Activated CD4-positive, alpha-beta T cell treated with anti-CD3 and anti-CD28 coated beads for 36 hours (primary cell): ENCODE measurements at regions of chr17 and their contacts with region 1.

Region 1: GRCh38 chr17:4215882-4216570 is 47.8 kb downstream of the ANKFY1 start:
- DNase-seq: no peak
- ATAC-seq: no peak
- H3K4me3 Mint-ChIP-seq: no peak overlapping the region
- H3K27ac Mint-ChIP-seq: peak overlapping the region; percentile 3
- H3K4me1 Mint-ChIP-seq: peaks cover 7% of the 10 kb centered on the region
- H3K27me3 Mint-ChIP-seq: no peaks in the 10 kb centered on the region

Region 2: DNA sequence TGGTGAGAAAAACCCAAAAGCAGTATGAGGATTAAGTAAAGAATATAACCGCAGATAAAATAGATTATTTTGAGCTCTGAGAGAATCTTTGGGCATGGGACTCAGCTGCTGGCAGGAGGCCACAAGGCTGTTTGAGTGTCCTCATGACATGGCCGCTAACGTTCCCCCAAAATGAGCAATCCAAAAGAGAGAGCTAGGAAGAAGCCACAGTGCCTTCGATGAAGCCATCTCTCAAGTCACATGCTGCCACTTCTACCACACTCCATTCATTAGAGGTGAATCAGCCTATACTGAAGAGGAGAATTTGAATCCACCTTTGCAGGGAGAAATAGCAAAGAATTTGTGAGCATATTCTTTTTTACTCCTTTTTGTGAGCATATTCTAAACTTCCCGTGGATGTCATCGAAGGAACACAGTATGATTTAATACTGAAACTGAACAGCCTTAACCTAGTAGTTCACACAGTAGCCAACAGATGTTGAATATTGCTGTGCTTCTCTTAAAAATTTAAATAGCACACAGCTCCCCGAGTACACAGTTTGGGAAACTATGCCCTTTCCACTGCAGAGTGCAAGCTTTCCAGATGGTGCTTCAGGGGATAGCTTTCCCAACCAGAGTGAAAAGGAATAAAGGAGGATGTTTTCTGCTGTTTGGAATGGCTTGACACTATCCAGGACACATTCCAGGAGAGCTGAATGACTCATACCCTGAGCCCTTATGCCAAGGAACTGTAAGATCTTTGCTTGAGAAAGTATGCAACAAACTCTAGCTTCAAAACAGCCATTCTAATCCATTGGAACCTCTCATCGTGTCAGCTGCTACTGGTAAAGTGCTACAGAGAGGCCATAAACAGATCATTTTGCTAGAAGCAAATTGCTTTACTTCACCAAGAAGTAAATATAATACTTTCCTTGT is 13.9 kb after region 1 on chr17:
- CTCF ChIA-PET with region 1: interaction called, 17 read pairs
- POLR2A ChIA-PET with region 1: no interaction called
- intact Hi-C with region 1: no loop called
- DNase-seq: no peak
- ATAC-seq: no peak
- H3K4me3 Mint-ChIP-seq: no peak overlapping the region
- H3K27ac Mint-ChIP-seq: no peak overlapping the region
- H3K4me1 Mint-ChIP-seq: peaks cover 21% of the 10 kb centered on the region
- H3K27me3 Mint-ChIP-seq: no peaks in the 10 kb centered on the region

Region 3: DNA sequence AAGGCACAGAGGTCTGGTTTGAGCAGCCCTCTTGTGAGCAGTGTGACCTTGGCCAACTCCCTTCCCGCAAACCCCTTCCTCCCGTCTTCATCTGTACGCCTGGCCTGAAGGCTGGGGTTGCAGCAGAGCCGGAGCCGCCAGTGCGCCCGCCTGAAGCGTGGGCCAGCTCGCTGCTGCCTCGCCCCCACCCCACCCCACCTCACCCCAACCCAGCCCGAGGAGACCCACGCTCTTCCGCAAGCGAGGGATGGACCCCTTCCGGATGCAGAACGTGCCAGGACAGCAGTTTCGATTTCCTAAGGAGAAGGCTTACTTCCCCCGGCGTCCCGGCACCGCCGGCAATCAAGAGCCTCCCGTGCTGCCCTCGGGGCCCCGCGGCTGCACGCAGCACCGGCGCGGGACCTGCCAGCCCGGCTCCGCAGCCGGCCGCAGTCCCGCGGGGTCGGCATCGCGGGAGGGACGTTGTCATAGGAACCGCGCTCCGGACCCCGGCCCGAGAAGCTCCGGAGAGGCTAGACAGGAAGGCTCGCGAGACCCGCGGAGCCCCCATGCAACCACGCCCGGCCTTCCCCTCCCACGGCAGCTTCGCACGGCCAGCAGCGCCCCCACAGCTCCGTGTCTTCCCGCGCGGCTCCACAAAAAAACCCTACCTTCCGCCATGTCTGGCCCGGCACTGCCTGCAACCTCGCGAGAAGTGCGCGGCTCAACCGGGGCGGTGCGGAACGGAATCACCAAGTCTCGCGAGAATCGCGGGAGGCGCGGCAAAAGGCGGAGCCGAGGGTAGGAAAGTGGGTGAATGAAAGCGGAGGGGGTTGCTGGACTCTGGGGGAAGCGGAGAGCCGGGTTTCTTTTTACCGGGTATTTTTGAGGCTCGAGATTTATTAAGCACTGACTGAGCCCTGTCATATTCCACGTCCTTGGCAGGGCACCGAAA is 47.5 kb after region 1 on chr17 and contains the start of gene ANKFY1:
- CTCF ChIA-PET with region 1: interaction called, 7 read pairs
- POLR2A ChIA-PET with region 1: no interaction called
- intact Hi-C with region 1: loop called in 1 of 2 experiments (anchors 1 kb)
- DNase-seq: peak; percentile 99
- ATAC-seq: peak; percentile 99
- H3K4me3 Mint-ChIP-seq: peak within 1 kb of the TSS; percentile 97
- H3K27ac Mint-ChIP-seq: peak within 1 kb of the TSS; percentile 96
- H3K4me1 Mint-ChIP-seq: peaks cover 35% of the 10 kb centered on the region
- H3K27me3 Mint-ChIP-seq: no peaks in the 10 kb centered on the region
- total RNA-seq, gene ANKFY1: 39.8 to 40.7 TPM

Region 4: GRCh38 chr17:4407851-4408250 is 191.8 kb after region 1 on chr17:
- CTCF ChIA-PET with region 1: interaction called, 74 read pairs
- POLR2A ChIA-PET with region 1: no interaction called
- intact Hi-C with region 1: loop called (anchors 1 kb)
- DNase-seq: no peak
- ATAC-seq: no peak
- H3K4me3 Mint-ChIP-seq: no peak overlapping the region
- H3K27ac Mint-ChIP-seq: no peak overlapping the region
- H3K4me1 Mint-ChIP-seq: peaks cover 2% of the 10 kb centered on the region
- H3K27me3 Mint-ChIP-seq: no peaks in the 10 kb centered on the region

Region 5: DNA sequence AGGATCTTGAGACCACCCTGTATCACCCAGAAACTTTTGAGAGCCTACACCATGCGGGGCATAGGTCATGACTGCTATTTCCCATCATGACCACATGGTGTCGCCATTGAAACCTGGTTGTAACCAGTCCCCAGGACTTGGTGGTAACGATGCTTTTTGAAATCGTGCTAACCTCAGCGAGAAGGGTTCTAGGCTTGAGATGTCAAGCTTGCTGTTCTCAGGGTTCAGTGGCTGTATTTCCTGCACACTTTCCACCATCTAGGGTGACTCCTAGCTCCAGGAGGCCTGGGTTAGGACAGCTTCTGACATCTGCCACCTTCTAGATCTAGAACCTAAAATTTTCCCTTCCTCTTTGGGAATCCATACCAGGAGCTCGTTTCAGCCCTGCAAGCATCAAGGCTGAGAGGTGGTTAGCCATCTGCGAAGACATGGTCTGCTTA is 204.7 kb after region 1 on chr17:
- CTCF ChIA-PET with region 1: interaction called, 74 read pairs
- POLR2A ChIA-PET with region 1: no interaction called
- intact Hi-C with region 1: no loop called
- DNase-seq: peak; percentile 74
- ATAC-seq: peak; percentile 97
- H3K4me3 Mint-ChIP-seq: no peak overlapping the region
- H3K27ac Mint-ChIP-seq: no peak overlapping the region
- H3K4me1 Mint-ChIP-seq: no peaks in the 10 kb centered on the region
- H3K27me3 Mint-ChIP-seq: no peaks in the 10 kb centered on the region

Region 6: GRCh38 chr17:4463818-4464476 is 247.9 kb after region 1 on chr17:
- CTCF ChIA-PET with region 1: no interaction called
- POLR2A ChIA-PET with region 1: no interaction called
- intact Hi-C with region 1: no loop called
- DNase-seq: no peak
- ATAC-seq: no peak
- H3K4me3 Mint-ChIP-seq: no peak overlapping the region
- H3K27ac Mint-ChIP-seq: no peak overlapping the region
- H3K4me1 Mint-ChIP-seq: no peaks in the 10 kb centered on the region
- H3K27me3 Mint-ChIP-seq: no peaks in the 10 kb centered on the region

Region 7: DNA sequence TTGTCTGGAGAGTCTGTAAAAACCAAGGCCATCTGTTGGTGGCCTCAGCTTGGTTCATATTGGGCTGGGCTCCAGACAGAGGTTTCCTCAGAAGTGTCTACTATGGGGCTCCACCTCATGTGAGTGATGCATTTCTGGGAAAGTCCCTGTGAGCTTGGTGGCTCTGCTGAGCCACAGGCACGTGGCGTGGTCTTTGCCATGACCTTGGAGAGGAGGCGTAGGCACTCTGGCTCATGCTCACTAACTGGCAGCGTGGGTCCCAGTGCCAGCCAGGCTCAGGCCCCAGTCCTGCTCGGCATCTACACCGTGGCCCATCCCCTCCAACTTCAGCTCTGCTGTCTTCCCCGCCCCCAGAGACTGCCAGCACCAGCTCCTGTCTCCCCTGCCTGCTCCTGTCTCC is 357.6 kb after region 1 on chr17:
- CTCF ChIA-PET with region 1: no interaction called
- POLR2A ChIA-PET with region 1: no interaction called
- intact Hi-C with region 1: no loop called
- DNase-seq: peak; percentile 88
- ATAC-seq: peak; percentile 100
- H3K4me3 Mint-ChIP-seq: peak overlapping the region; percentile 22
- H3K27ac Mint-ChIP-seq: peak overlapping the region; percentile 11
- H3K4me1 Mint-ChIP-seq: peaks cover 18% of the 10 kb centered on the region
- H3K27me3 Mint-ChIP-seq: peaks cover 6% of the 10 kb centered on the region